Caco-2 (cell line): ENCODE measurements at regions of chr17 and their contacts with region 1.

Region 1: GRCh38 chr17:81294856-81295680 is at the start of gene SLC38A10:
- DNase-seq: peak; percentile 92 to 94
- H3K4me3 ChIP-seq: peak within 1 kb of the TSS; percentile 96
- H3K4me3 Mint-ChIP-seq: peak within 1 kb of the TSS; percentile 80
- H3K27ac Mint-ChIP-seq: peak within 1 kb of the TSS; percentile 83
- H3K4me1 ChIP-seq: peaks cover 17% of the 10 kb centered on the region
- H3K4me1 Mint-ChIP-seq: peaks cover 12% of the 10 kb centered on the region
- H3K27me3 ChIP-seq: no peaks in the 10 kb centered on the region
- H3K27me3 Mint-ChIP-seq: no peaks in the 10 kb centered on the region
- CTCF ChIP-seq: no peak
- total RNA-seq, gene SLC38A10: 131 and 137 TPM in 2 replicates

Region 2: GRCh38 chr17:81040791-81041337 is 254.2 kb before region 1 on chr17:
- CTCF ChIA-PET with region 1: no interaction called
- POLR2A ChIA-PET with region 1: no interaction called
- intact Hi-C with region 1: no loop called
- DNase-seq: peak in 1 of 2 experiments; percentile 47
- H3K4me3 ChIP-seq: no peak overlapping the region
- H3K4me3 Mint-ChIP-seq: peak overlapping the region; percentile 44
- H3K27ac Mint-ChIP-seq: peak overlapping the region; percentile 96
- H3K4me1 ChIP-seq: peaks cover 95% of the 10 kb centered on the region
- H3K4me1 Mint-ChIP-seq: peaks cover 67% of the 10 kb centered on the region
- H3K27me3 ChIP-seq: no peaks in the 10 kb centered on the region
- H3K27me3 Mint-ChIP-seq: no peaks in the 10 kb centered on the region
- CTCF ChIP-seq: peak; percentile 18 to 24

Region 3: GRCh38 chr17:81253358-81254131 is 41.5 kb before region 1 on chr17:
- CTCF ChIA-PET with region 1: interaction called, 3 read pairs
- POLR2A ChIA-PET with region 1: no interaction called
- intact Hi-C with region 1: loop called (anchors 5 kb)
- DNase-seq: peak in 1 of 2 experiments; percentile 66
- H3K4me3 ChIP-seq: no peak overlapping the region
- H3K4me3 Mint-ChIP-seq: no peak overlapping the region
- H3K27ac Mint-ChIP-seq: no peak overlapping the region
- H3K4me1 ChIP-seq: no peaks in the 10 kb centered on the region
- H3K4me1 Mint-ChIP-seq: no peaks in the 10 kb centered on the region
- H3K27me3 ChIP-seq: no peaks in the 10 kb centered on the region
- H3K27me3 Mint-ChIP-seq: no peaks in the 10 kb centered on the region
- CTCF ChIP-seq: peak; percentile 64 to 94

Region 4: DNA sequence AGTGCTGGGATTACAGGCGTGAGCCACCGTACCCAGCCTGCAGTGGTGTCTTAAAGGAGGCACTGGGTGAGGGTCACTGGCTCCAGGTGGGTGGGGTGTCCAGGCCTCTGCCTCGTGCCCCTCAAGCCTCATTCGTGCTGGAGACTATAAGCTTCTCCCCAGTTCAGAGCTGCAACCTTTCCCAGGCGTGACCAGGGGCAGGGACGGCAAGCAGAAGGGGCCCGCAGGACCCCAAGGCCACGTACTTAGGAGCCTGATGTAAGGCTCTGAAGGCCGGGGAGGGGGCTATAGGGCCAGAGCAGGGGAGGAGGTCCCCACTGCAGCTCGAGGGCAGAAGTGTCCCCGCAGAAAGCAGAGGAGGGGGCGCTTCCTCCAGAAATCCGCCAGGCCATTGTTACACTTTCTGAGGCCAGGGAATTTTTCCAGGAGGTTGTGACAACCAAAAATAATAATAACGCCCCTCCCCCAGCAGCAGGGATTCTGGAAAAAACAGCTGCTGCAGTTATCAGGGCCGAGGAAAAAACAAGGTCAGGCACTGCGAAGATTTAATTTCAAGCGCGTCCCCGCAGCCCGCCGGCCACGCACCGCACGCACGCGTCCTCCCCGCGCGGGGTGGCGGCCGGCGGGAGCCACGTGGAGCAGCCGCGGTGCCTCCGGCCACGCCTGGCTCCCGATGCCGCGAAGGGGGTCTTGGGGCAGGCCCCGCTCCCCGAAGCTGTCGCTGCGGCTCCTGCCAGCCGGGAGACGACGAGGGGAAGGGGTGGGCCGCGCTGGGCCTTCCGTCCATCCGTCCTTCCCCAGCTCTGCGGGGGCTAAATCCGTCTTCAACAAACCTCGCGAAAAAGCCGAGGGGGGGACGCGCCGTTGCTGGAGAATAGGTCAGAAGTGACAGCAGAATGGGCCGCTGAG is 45.8 kb after region 1 on chr17:
- CTCF ChIA-PET with region 1: interaction called, 3 read pairs
- POLR2A ChIA-PET with region 1: interaction called, 4 read pairs
- intact Hi-C with region 1: loop called (anchors 1 kb)
- DNase-seq: peak; percentile 61 to 68
- H3K4me3 ChIP-seq: peak overlapping the region; percentile 91
- H3K4me3 Mint-ChIP-seq: peak overlapping the region; percentile 85
- H3K27ac Mint-ChIP-seq: peak overlapping the region; percentile 29
- H3K4me1 ChIP-seq: peaks cover 42% of the 10 kb centered on the region
- H3K4me1 Mint-ChIP-seq: peaks cover 10% of the 10 kb centered on the region
- H3K27me3 ChIP-seq: no peaks in the 10 kb centered on the region
- H3K27me3 Mint-ChIP-seq: no peaks in the 10 kb centered on the region
- CTCF ChIP-seq: no peak

Region 5: DNA sequence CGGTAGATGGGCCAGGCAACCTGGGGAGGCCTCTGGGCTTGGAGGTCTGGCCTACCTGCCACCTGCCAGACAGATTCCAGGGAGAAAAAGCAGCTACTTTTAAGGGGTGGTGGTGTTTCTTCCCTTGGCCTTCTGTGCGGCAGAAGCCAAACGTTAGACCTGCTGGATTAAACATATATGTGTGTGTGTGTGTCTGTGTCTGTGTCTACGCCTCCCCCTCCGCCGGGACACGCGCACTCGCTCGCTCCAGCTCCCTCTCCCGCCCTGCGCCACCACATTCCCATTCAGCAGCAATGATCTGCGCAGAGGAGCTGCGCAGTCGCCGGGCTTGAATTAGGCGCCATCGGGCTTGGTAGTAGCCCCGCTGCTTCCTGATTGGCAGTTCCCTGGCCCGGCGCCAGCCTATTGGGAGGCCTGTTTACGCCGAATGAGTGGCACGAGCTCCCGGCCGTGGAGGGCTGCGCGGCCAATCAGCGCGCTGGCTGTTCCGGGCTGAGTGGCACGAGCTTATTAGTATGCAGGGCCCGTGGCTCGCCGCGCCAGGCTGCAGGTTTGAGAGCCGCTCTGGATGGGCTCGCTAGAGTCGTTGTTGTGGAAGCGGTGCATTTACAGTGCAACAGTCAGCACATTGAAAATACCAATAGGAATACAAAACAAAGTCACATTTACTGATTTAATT is 100.0 kb after region 1 on chr17 and contains the start of gene BAHCC1:
- CTCF ChIA-PET with region 1: interaction called, 7 read pairs
- POLR2A ChIA-PET with region 1: interaction called, 11 read pairs
- intact Hi-C with region 1: no loop called
- DNase-seq: peak; percentile 100
- H3K4me3 ChIP-seq: peak within 1 kb of the TSS; percentile 94
- H3K4me3 Mint-ChIP-seq: peak within 1 kb of the TSS; percentile 84
- H3K27ac Mint-ChIP-seq: peak within 1 kb of the TSS; percentile 98
- H3K4me1 ChIP-seq: peaks cover 12% of the 10 kb centered on the region
- H3K4me1 Mint-ChIP-seq: peaks cover 28% of the 10 kb centered on the region
- H3K27me3 ChIP-seq: no peaks in the 10 kb centered on the region
- H3K27me3 Mint-ChIP-seq: no peaks in the 10 kb centered on the region
- CTCF ChIP-seq: no peak
- total RNA-seq, gene BAHCC1: 10.2 and 15.5 TPM in 2 replicates

Region 6: DNA sequence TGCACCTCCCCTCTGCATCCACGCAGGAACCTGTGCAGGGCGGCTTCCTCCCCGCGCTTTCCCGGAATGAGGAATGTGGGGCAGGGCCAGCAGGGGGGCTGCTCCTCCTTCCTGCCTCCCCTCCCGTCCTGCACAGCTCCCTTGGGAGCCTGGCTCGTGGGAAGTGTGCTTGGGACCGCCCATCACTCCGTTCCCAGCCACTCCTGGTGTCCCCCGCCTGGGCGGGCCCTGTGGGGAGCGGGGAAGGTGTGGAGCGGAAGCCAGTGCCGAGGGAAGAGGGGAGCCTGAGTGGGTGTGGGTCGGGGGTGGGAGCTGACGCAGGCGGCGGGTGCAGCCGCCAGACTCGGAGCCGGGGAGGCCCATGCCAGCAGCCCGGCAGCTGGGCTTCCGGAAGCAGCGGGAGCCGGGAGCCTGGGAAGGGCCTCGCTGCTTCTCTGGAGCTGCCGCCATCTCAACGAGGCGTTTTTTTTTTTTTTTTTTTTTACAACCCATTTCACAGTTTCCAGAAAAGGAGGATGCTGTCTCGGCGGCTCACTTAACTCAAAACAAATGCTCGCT is 124.3 kb after region 1 on chr17:
- CTCF ChIA-PET with region 1: interaction called, 3 read pairs
- POLR2A ChIA-PET with region 1: interaction called, 15 read pairs
- intact Hi-C with region 1: no loop called
- DNase-seq: peak; percentile 84 to 90
- H3K4me3 ChIP-seq: peak overlapping the region; percentile 35
- H3K4me3 Mint-ChIP-seq: peak overlapping the region; percentile 71
- H3K27ac Mint-ChIP-seq: peak overlapping the region; percentile 53
- H3K4me1 ChIP-seq: peaks cover 11% of the 10 kb centered on the region
- H3K4me1 Mint-ChIP-seq: no peaks in the 10 kb centered on the region
- H3K27me3 ChIP-seq: no peaks in the 10 kb centered on the region
- H3K27me3 Mint-ChIP-seq: no peaks in the 10 kb centered on the region
- CTCF ChIP-seq: no peak